ENCODE measurements at regions of chr5 and their contacts with region 1.

Region 1: GRCh38 chr5:172106511-172107356 is 81.3 kb downstream of the STK10 start:
- DNase-seq: peak; percentile 31 to 81 (median 69)
- ATAC-seq: peak; percentile 42
- H3K4me3 ChIP-seq: no peak overlapping the region
- H3K4me3 Mint-ChIP-seq: peak overlapping the region; percentile 8
- H3K27ac ChIP-seq: peak overlapping the region in 1 of 2 experiments; percentile 51
- H3K27ac Mint-ChIP-seq: peak overlapping the region; percentile 84
- H3K4me1 ChIP-seq: peaks cover 36% of the 10 kb centered on the region
- H3K4me1 Mint-ChIP-seq: peaks cover 48% of the 10 kb centered on the region
- H3K27me3 ChIP-seq: no peaks in the 10 kb centered on the region
- H3K27me3 Mint-ChIP-seq: no peaks in the 10 kb centered on the region
- CTCF ChIP-seq: peak; percentile 98

Region 2: GRCh38 chr5:171907725-171908343 is 198.9 kb before region 1 on chr5:
- CTCF ChIA-PET with region 1: interaction called, 11 read pairs
- POLR2A ChIA-PET with region 1: no interaction called
- intact Hi-C with region 1: loop called in 1 of 2 experiments (anchors 1 kb)
- DNase-seq: peak; percentile 11 to 69 (median 41)
- ATAC-seq: peak; percentile 71
- H3K4me3 ChIP-seq: no peak overlapping the region
- H3K4me3 Mint-ChIP-seq: no peak overlapping the region
- H3K27ac ChIP-seq: no peak overlapping the region
- H3K27ac Mint-ChIP-seq: no peak overlapping the region
- H3K4me1 ChIP-seq: no peaks in the 10 kb centered on the region
- H3K4me1 Mint-ChIP-seq: peaks cover 41% of the 10 kb centered on the region
- H3K27me3 ChIP-seq: no peaks in the 10 kb centered on the region
- H3K27me3 Mint-ChIP-seq: no peaks in the 10 kb centered on the region
- CTCF ChIP-seq: peak; percentile 86

Region 3: GRCh38 chr5:172065501-172065990 is 41.2 kb before region 1 on chr5:
- CTCF ChIA-PET with region 1: interaction called, 3 read pairs
- POLR2A ChIA-PET with region 1: interaction called, 3 read pairs
- intact Hi-C with region 1: loop called (anchors 2 to 5 kb)
- DNase-seq: no peak
- ATAC-seq: no peak
- H3K4me3 ChIP-seq: peak overlapping the region in 1 of 2 experiments; percentile 6
- H3K4me3 Mint-ChIP-seq: peak overlapping the region; percentile 15
- H3K27ac ChIP-seq: peak overlapping the region; percentile 34 to 67
- H3K27ac Mint-ChIP-seq: peak overlapping the region; percentile 98
- H3K4me1 ChIP-seq: peaks cover 57% of the 10 kb centered on the region
- H3K4me1 Mint-ChIP-seq: peaks cover 72% of the 10 kb centered on the region
- H3K27me3 ChIP-seq: no peaks in the 10 kb centered on the region
- H3K27me3 Mint-ChIP-seq: no peaks in the 10 kb centered on the region
- CTCF ChIP-seq: no peak

Region 4: DNA sequence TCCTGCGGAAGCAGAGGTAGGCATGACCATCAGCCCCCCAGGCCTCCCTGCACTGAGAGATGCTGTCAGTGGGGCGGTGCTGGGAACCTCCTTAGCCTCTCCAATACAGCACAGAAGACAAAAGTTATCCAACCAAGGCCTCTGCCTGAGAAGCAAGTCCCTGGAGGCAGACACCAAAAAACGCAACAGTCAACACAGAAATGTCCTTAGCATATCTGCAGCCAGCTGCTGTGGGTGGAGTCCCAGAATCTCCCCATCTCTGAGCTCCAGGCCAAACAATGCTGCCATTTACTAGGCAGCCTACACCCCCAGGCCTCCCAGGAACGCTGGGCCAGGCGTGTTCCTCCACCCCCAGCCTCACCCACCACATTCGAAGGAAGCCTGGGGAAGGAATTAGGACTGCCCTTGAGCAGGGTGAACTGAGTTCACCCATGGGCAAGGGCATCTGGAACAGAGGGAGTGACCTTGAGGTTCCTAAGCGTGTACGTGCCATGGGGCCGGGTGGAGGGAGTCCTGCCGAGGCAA is 37.6 kb after region 1 on chr5:
- CTCF ChIA-PET with region 1: interaction called, 4 read pairs
- POLR2A ChIA-PET with region 1: no interaction called
- intact Hi-C with region 1: loop called in 1 of 2 experiments (anchors 5 kb)
- DNase-seq: no peak
- ATAC-seq: no peak
- H3K4me3 ChIP-seq: no peak overlapping the region
- H3K4me3 Mint-ChIP-seq: no peak overlapping the region
- H3K27ac ChIP-seq: peak overlapping the region in 1 of 2 experiments; percentile 47
- H3K27ac Mint-ChIP-seq: peak overlapping the region; percentile 90
- H3K4me1 ChIP-seq: peaks cover 90% of the 10 kb centered on the region
- H3K4me1 Mint-ChIP-seq: peaks cover 93% of the 10 kb centered on the region
- H3K27me3 ChIP-seq: no peaks in the 10 kb centered on the region
- H3K27me3 Mint-ChIP-seq: no peaks in the 10 kb centered on the region
- CTCF ChIP-seq: no peak

Region 5: GRCh38 chr5:172179361-172179989 is 72.7 kb after region 1 on chr5:
- CTCF ChIA-PET with region 1: interaction called, 197 read pairs
- POLR2A ChIA-PET with region 1: interaction called, 82 read pairs
- intact Hi-C with region 1: loop called in 1 of 2 experiments (anchors 1 kb)
- DNase-seq: peak in 8 of 9 experiments; percentile 36 to 86 (median 58)
- ATAC-seq: peak; percentile 9
- H3K4me3 ChIP-seq: peak overlapping the region; percentile 49 to 51
- H3K4me3 Mint-ChIP-seq: peak overlapping the region; percentile 80
- H3K27ac ChIP-seq: peak overlapping the region; percentile 92 to 97
- H3K27ac Mint-ChIP-seq: peak overlapping the region; percentile 97
- H3K4me1 ChIP-seq: peaks cover 90% of the 10 kb centered on the region
- H3K4me1 Mint-ChIP-seq: peaks cover 89% of the 10 kb centered on the region
- H3K27me3 ChIP-seq: no peaks in the 10 kb centered on the region
- H3K27me3 Mint-ChIP-seq: no peaks in the 10 kb centered on the region
- CTCF ChIP-seq: no peak

Region 6: DNA sequence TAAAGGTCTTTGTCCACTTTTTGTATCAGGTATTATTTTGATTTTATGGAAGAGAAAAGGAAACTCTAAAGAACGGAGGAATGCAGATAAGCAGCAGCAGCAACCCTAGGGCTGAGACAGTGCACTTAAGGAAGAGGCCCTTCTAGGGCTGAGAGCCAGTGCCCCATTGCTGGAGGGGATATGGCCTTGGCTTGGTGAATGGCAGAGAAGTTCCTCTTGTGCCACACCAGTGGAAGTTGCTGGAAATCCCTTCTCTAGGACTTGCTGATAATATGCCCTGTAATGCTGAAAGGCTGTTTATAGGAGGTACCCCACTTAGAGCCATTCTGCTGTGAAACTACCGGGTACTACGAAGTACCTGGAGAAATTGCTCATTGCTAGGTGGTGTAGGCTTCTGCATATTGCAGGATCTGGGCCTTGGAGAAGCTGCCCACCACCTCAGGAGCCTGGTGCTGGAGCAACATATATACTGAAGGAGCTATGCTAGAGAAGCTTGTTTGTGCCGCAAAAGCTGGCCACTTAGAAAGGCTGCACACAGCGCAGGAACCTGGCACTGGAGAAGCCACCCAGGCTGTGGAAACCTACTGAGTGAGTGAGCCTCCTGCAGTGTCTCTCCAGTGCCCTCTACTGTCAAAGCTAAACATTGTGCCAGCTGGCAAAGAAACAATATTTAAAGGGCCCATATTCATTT is 186.5 kb after region 1 on chr5:
- CTCF ChIA-PET with region 1: interaction called, 6 read pairs
- POLR2A ChIA-PET with region 1: no interaction called
- intact Hi-C with region 1: loop called (anchors 1 to 2 kb)
- DNase-seq: peak; percentile 16 to 78 (median 53)
- ATAC-seq: peak; percentile 100
- H3K4me3 ChIP-seq: no peak overlapping the region
- H3K4me3 Mint-ChIP-seq: no peak overlapping the region
- H3K27ac ChIP-seq: no peak overlapping the region
- H3K27ac Mint-ChIP-seq: no peak overlapping the region
- H3K4me1 ChIP-seq: no peaks in the 10 kb centered on the region
- H3K4me1 Mint-ChIP-seq: peaks cover 2% of the 10 kb centered on the region
- H3K27me3 ChIP-seq: no peaks in the 10 kb centered on the region
- H3K27me3 Mint-ChIP-seq: peaks cover 3% of the 10 kb centered on the region
- CTCF ChIP-seq: peak; percentile 82

Region 7: DNA sequence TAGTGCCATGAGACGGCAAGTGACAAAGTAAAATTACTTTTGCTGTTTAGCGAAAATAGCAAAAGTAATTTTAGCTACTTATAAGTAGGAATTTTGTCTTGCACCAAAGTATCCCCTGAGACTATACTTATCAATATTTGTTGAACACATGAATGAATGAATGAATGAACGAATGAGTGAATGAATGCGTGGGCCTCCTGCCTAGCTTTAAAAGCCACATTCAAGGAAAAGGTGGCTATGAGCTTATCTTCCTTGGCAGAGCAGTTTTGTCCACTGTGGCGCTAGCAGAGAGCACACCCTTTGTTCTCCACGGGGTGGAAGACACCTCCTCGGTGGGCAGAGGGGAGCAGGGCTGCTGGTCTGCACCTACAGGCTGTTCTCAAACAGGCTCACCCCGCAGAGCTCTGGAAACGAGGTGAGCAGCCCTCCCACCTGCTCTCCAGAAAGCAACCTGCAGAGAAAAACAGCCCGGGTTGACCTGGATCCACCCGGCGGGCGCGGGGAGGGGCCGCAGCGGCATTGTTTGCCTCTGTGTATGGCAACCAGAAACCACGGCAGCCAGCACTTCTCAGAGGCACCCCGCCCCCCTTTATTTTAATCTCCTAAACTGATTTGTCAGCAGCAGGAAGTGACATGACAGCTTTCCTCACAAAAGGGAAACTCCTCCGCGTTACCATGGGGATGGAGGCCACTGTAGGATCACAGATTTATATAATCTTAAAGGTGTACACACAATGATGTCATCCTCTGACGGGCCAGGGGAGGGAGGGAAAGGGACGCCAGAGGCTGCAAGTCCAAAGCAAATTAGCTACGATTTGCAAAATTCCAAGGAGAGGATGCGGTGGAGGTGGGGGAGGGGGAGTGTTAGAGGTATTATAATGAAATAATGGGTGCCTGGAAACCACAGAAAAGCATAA is 658.4 kb after region 1 on chr5:
- CTCF ChIA-PET with region 1: no interaction called
- POLR2A ChIA-PET with region 1: no interaction called
- intact Hi-C with region 1: loop called in 1 of 2 experiments (anchors 5 kb)
- DNase-seq: peak; percentile 88 to 100 (median 96)
- ATAC-seq: peak; percentile 77
- H3K4me3 ChIP-seq: peak overlapping the region; percentile 41 to 48
- H3K4me3 Mint-ChIP-seq: peak overlapping the region; percentile 81
- H3K27ac ChIP-seq: peak overlapping the region; percentile 86 to 89
- H3K27ac Mint-ChIP-seq: peak overlapping the region; percentile 96
- H3K4me1 ChIP-seq: peaks cover 33% of the 10 kb centered on the region
- H3K4me1 Mint-ChIP-seq: peaks cover 52% of the 10 kb centered on the region
- H3K27me3 ChIP-seq: no peaks in the 10 kb centered on the region
- H3K27me3 Mint-ChIP-seq: no peaks in the 10 kb centered on the region
- CTCF ChIP-seq: no peak